ENCODE measurements at regions of chr12 and their contacts with region 1.

Region 1: GRCh38 chr12:13023811-13024530 is 20.2 kb upstream of the FAM234B start:
- DNase-seq: peak; percentile 54 to 57
- H3K4me3 ChIP-seq: no peak overlapping the region
- H3K27ac ChIP-seq: no peak overlapping the region
- H3K4me1 ChIP-seq: no peaks in the 10 kb centered on the region
- H3K27me3 ChIP-seq: no peaks in the 10 kb centered on the region
- CTCF ChIP-seq: peak; percentile 69

Region 2: GRCh38 chr12:12724661-12725545 is 299.1 kb before region 1 on chr12:
- CTCF ChIA-PET with region 1: no interaction called
- POLR2A ChIA-PET with region 1: no interaction called
- intact Hi-C with region 1: no loop called
- DNase-seq: peak in 1 of 2 experiments; percentile 96
- H3K4me3 ChIP-seq: peak overlapping the region; percentile 96
- H3K27ac ChIP-seq: peak overlapping the region; percentile 98
- H3K4me1 ChIP-seq: peaks cover 31% of the 10 kb centered on the region
- H3K27me3 ChIP-seq: no peaks in the 10 kb centered on the region
- CTCF ChIP-seq: no peak

Region 3: DNA sequence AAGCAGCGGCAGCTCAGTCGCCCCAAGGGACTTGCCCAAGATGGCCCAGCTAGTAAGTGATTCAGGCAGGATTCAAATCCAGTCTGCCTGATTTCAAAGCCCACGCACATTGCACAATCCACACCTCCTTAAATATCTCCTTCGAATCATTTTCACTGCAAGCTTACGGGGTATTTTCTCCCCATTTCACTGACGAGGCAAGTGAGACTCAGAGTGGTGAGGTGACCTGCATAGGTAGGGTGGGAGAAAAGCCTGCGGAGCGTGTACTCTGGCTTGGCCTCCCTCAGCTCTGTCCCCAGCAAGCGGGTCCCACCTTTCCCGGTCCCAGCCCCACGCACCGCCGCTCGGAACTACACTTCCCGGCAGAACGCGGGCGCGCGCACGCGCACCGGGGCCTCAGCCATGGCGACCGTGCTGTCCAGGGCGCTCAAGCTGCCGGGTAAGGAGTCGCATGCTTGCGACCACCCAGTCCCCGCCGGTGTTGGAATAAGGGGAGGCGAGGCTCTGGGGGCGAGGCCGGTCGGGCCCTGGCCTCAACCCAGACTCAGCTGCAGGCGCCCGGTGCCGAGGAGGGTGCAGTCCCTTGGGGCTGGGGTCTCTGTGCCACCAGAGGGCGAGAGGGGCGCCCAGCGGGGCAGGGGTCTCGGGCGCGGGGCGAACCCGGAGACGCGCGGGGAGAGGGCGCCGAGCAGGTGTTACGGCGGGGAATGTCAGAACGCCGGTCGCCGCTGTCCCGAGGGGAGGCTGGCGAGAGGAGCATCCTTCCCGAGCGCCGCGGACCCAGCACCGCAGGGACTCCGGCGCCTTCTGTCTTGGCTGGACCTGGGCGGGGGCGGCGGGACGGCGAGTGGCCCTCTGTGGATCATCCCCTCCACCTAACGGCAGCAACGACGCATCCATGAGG is 20.3 kb after region 1 on chr12 and contains the start of gene FAM234B:
- CTCF ChIA-PET with region 1: interaction called, 15 read pairs
- POLR2A ChIA-PET with region 1: no interaction called
- intact Hi-C with region 1: no loop called
- DNase-seq: peak in 1 of 2 experiments; percentile 71
- H3K4me3 ChIP-seq: peak within 1 kb of the TSS; percentile 99
- H3K27ac ChIP-seq: no peak within 1 kb of the TSS
- H3K4me1 ChIP-seq: peaks cover 11% of the 10 kb centered on the region; the same call in 1 of the 2 replicates
- H3K27me3 ChIP-seq: no peaks in the 10 kb centered on the region
- CTCF ChIP-seq: no peak; the same call in 1 of the 2 replicates
- total RNA-seq, gene FAM234B: 7.3 and 7.5 TPM in 2 replicates

Region 4: DNA sequence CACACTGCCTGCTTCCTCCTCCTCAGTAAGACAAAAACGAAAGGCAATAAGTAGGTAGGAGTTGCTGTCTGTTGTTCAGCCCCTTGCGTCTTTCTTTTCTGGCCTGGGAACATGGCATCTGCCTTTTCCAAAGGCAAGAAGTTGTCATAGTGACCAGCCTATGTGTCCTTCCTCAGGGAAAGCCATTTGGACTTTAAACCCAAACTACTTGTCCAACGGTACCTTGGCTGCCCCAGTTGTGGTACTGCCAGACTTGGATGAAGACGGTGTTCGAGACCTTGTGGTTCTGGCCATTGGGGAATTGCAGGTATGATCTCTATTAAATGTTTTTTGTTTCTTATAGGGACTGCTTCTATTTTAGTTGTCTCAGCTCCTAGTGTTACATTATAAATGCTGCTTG is 38.7 kb after region 1 on chr12:
- CTCF ChIA-PET with region 1: no interaction called
- POLR2A ChIA-PET with region 1: no interaction called
- intact Hi-C with region 1: no loop called
- DNase-seq: no peak
- H3K4me3 ChIP-seq: no peak overlapping the region
- H3K27ac ChIP-seq: no peak overlapping the region
- H3K4me1 ChIP-seq: 0 out of 2 replicates have a peak, but pooled peaks cover 10% of the 10 kb centered on the region
- H3K27me3 ChIP-seq: no peaks in the 10 kb centered on the region
- CTCF ChIP-seq: no peak

Region 5: GRCh38 chr12:13211859-13212664 is 188.1 kb after region 1 on chr12:
- CTCF ChIA-PET with region 1: no interaction called
- POLR2A ChIA-PET with region 1: interaction called, 7 read pairs
- intact Hi-C with region 1: loop called (anchors 1 kb)
- DNase-seq: peak in 1 of 2 experiments; percentile 64
- H3K4me3 ChIP-seq: no peak overlapping the region
- H3K27ac ChIP-seq: peak overlapping the region; percentile 99
- H3K4me1 ChIP-seq: peaks cover 48% of the 10 kb centered on the region
- H3K27me3 ChIP-seq: no peaks in the 10 kb centered on the region
- CTCF ChIP-seq: peak; percentile 71

Region 6: DNA sequence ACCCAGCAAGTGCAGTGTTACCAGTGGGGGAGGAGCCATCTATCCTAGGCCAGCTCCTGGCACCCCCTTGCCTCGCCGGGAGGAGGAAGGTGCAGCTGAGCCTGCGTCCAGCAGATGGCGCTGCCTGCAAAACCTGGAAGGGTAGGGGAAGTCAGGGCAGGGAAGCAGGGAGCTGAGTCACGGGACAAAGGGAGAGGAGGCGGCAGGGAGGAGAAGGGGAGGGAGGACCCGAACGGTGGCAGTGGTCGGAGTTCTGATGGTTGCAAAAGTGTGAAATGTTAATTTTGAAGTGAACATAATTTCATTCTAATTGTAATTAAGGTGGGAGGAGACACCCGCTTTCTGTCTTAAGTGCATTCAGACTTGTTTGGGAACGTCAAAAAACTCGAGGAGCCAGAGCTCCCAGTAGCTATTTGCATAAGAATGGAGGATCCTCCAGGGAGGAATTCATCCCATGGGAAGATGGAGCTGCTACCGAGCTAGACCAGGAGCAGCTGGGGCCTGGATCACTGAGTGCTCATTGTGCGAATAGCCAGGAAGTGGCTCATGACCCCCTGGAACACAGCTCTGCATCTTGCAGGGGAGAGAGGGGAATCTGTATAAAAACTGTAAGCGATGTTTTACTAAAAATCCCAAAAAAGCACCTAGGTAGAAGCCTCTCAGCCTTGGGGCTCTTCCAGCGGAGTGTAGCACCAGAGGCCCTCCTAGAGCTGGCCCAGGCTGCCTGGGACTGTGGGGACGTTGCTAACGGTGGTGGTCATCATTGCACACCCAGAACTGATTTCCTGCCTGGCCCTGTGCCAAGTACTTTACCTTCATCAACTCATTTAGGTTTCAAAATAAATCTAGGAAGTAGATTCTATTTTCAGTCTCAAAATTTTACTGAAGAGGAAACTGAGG is 232.1 kb after region 1 on chr12:
- CTCF ChIA-PET with region 1: interaction called, 9 read pairs
- POLR2A ChIA-PET with region 1: interaction called, 6 read pairs
- intact Hi-C with region 1: loop called (anchors 5 kb)
- DNase-seq: peak; percentile 80 to 99
- H3K4me3 ChIP-seq: peak overlapping the region; percentile 36; the same call in 1 of the 2 replicates
- H3K27ac ChIP-seq: no peak overlapping the region
- H3K4me1 ChIP-seq: peaks cover 14% of the 10 kb centered on the region
- H3K27me3 ChIP-seq: no peaks in the 10 kb centered on the region
- CTCF ChIP-seq: peak; percentile 97

Region 7: GRCh38 chr12:13941258-13942249 is 917.6 kb after region 1 on chr12:
- CTCF ChIA-PET with region 1: no interaction called
- POLR2A ChIA-PET with region 1: no interaction called
- intact Hi-C with region 1: loop called (anchors 1 kb)
- DNase-seq: peak; percentile 53 to 68
- H3K4me3 ChIP-seq: no peak overlapping the region
- H3K27ac ChIP-seq: no peak overlapping the region
- H3K4me1 ChIP-seq: no peaks in the 10 kb centered on the region; the same call in 1 of the 2 replicates
- H3K27me3 ChIP-seq: no peaks in the 10 kb centered on the region
- CTCF ChIP-seq: peak; percentile 61

Measured in PC-9 (cell line).